ENCODE measurements at regions of chr3 and their contacts with region 1.

Region 1: GRCh38 chr3:144011251-144011799 is 39.7 kb downstream of the DIPK2A start:
- DNase-seq: peak; percentile 75
- ATAC-seq: peak; percentile 93
- H3K4me3 ChIP-seq: no peak overlapping the region; the same call in 1 of the 2 replicates
- H3K27ac ChIP-seq: peak overlapping the region; percentile 87
- H3K4me1 ChIP-seq: peaks cover 27% of the 10 kb centered on the region
- H3K27me3 ChIP-seq: no peaks in the 10 kb centered on the region
- CTCF ChIP-seq: no peak

Region 2: GRCh38 chr3:143775459-143775858 is 235.9 kb before region 1 on chr3:
- CTCF ChIA-PET with region 1: no interaction called
- POLR2A ChIA-PET with region 1: no interaction called
- intact Hi-C with region 1: no loop called
- DNase-seq: peak; percentile 61
- ATAC-seq: peak; percentile 77
- H3K4me3 ChIP-seq: no peak overlapping the region
- H3K27ac ChIP-seq: no peak overlapping the region
- H3K4me1 ChIP-seq: no peaks in the 10 kb centered on the region
- H3K27me3 ChIP-seq: no peaks in the 10 kb centered on the region
- CTCF ChIP-seq: peak; percentile 66

Region 3: DNA sequence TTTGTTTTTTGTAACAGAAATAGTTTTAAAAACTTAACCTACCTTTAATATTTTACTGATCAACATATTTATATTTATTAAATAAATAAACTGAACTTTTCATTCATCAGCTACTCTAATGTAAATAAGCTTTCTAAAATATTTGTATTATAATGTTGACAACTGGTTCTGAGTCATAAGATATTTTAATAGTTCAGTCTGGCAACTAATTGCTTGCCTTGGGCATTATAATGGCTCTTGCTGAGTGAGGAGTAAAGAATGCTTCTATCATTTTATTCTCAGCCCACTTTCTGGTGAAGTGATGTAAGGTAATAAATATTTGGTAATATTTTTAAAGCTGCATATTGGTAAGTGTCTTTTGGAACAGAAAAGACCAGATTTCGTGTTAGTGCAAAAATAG is 41.8 kb after region 1 on chr3:
- CTCF ChIA-PET with region 1: no interaction called
- POLR2A ChIA-PET with region 1: no interaction called
- intact Hi-C with region 1: loop called (anchors 1 kb)
- DNase-seq: peak; percentile 91
- ATAC-seq: peak; percentile 80
- H3K4me3 ChIP-seq: no peak overlapping the region
- H3K27ac ChIP-seq: peak overlapping the region; percentile 48
- H3K4me1 ChIP-seq: peaks cover 32% of the 10 kb centered on the region
- H3K27me3 ChIP-seq: no peaks in the 10 kb centered on the region
- CTCF ChIP-seq: no peak

Measured in PC-3 (cell line).